Activated CD8-positive, alpha-beta T cell treated with anti-CD3 and anti-CD28 coated beads, Interleukin-2, amount 10 ng/mL, durations not matched to agents 7 days and 5 days (primary cell): ENCODE measurements at regions of chr17 and their contacts with region 1.

Region 1: DNA sequence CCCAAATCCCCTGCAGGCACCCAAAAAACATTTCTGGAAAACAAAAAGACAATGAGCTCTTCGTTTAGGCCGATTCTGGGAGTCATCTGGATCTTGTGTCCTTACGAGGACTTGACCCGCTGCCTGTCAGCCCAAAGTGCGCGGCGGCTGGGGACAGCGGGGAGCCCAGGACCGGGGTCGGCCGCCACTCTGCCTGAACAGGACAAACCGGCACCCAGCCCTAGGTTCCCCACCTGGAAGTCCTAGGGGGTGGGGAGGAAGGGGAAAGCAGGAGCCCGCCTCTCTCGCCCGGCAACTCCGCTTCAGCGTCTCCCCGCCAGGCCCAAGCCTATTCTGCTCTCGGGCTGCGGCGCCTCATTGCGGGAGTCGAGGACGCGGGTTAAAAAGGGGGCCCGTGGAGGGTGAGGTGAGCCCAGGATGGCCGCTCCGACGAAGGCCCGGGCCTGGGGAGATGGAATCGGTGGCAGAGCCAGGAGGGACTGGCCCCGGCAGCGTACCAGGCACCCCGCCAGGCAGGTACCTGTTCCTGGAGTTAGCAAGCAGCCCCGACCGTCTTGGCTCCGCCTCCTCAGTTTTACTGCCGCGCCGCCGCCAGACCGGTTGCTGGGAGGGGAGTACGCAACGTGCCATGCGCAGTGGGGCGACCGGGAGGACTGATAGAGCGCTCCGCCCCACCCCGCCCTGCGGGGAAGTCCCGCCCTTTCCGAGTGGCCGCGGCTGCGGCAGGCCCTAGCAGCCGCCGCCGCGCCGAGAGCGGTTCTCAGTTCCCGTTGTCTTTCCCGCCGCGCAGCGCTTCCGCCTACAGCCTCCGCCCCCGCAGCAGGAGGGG is at the start of gene STRADA:
- DNase-seq: peak; percentile 99
- ATAC-seq: peak; percentile 96
- H3K4me3 Mint-ChIP-seq: peak within 1 kb of the TSS; percentile 94
- H3K27ac Mint-ChIP-seq: peak within 1 kb of the TSS; percentile 92
- H3K4me1 Mint-ChIP-seq: peaks cover 41% of the 10 kb centered on the region
- H3K27me3 Mint-ChIP-seq: no peaks in the 10 kb centered on the region
- total RNA-seq, gene STRADA: 46.0 to 49.9 TPM

Region 2: DNA sequence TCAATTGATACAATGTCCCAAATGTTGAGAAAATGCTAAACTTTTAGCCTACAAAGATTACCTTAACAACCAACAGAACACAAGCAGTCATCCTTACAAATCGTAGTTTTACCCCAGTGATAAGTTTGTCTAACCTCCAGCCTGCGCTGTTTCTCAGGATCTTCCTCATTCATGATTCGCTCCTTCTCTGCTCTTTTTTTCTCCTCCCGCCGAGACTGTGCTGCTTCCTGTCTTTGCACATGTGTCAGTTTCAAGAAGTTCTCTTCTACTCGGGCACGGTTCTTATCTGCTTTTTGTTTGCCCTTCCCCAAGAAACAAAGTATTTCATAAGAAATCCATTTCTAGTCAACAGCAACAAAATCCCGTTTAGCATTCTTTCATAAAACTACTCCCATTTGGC is 10.4 kb after region 1 on chr17:
- CTCF ChIA-PET with region 1: interaction called, 6 read pairs
- POLR2A ChIA-PET with region 1: interaction called, 14 read pairs
- DNase-seq: peak; percentile 50
- ATAC-seq: peak; percentile 79
- H3K4me3 Mint-ChIP-seq: peak overlapping the region; percentile 64
- H3K27ac Mint-ChIP-seq: peak overlapping the region; percentile 92
- H3K4me1 Mint-ChIP-seq: peaks cover 11% of the 10 kb centered on the region
- H3K27me3 Mint-ChIP-seq: no peaks in the 10 kb centered on the region

Region 3: GRCh38 chr17:63800800-63801199 is 59.4 kb after region 1 on chr17:
- CTCF ChIA-PET with region 1: no interaction called
- POLR2A ChIA-PET with region 1: no interaction called
- DNase-seq: no peak
- ATAC-seq: no peak
- H3K4me3 Mint-ChIP-seq: no peak overlapping the region
- H3K27ac Mint-ChIP-seq: no peak overlapping the region
- H3K4me1 Mint-ChIP-seq: no peaks in the 10 kb centered on the region
- H3K27me3 Mint-ChIP-seq: no peaks in the 10 kb centered on the region